ENCODE measurements at regions of chr3 and their contacts with region 1.

Region 1: GRCh38 chr3:123723522-123724168 is 138.8 kb upstream of the HACD2 start:
- DNase-seq: peak; percentile 78
- H3K4me3 ChIP-seq: no peak overlapping the region
- H3K27ac ChIP-seq: no peak overlapping the region
- H3K4me1 ChIP-seq: no peaks in the 10 kb centered on the region
- H3K27me3 ChIP-seq: peaks cover 2 to 13% of the 10 kb centered on the region in 2 experiments
- CTCF ChIP-seq: peak; percentile 84
- POLR2A ChIP-seq: no peak

Region 2: DNA sequence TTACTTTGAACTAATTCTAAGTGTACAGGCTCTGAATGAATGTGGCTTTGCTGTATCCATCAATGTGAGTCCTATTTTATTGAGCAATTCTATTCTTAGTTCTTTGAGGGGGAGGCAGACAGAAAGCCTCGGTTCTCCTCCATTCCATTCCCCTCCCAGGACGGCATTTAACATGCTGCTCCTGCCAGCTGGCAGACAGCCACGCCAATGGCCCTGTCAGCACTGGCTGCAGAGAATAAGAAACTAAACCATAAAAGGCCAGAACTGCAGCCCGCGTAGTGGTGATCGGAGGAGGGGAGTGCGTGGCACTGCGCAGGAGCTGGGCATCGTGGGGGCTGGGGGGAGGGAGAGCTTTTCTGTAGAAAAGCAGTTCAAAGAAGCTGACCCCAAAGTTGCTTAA is 62.7 kb before region 1 on chr3:
- CTCF ChIA-PET with region 1: interaction called, 154 read pairs
- POLR2A ChIA-PET with region 1: interaction called, 3 read pairs
- dilution Hi-C with region 1: no loop called
- intact Hi-C with region 1: no loop called
- DNase-seq: peak; percentile 89
- H3K4me3 ChIP-seq: no peak overlapping the region
- H3K27ac ChIP-seq: no peak overlapping the region
- H3K4me1 ChIP-seq: peaks cover 23% of the 10 kb centered on the region
- H3K27me3 ChIP-seq: no peaks in the 10 kb centered on the region
- CTCF ChIP-seq: no peak
- POLR2A ChIP-seq: no peak

Region 3: GRCh38 chr3:123700791-123701722 is 22.6 kb before region 1 on chr3:
- CTCF ChIA-PET with region 1: interaction called, 17 read pairs
- POLR2A ChIA-PET with region 1: no interaction called
- dilution Hi-C with region 1: no loop called
- intact Hi-C with region 1: loop called (anchors 1 kb)
- DNase-seq: no peak
- H3K4me3 ChIP-seq: no peak overlapping the region
- H3K27ac ChIP-seq: no peak overlapping the region
- H3K4me1 ChIP-seq: peaks cover 3% of the 10 kb centered on the region
- H3K27me3 ChIP-seq: no peaks in the 10 kb centered on the region
- CTCF ChIP-seq: no peak
- POLR2A ChIP-seq: no peak

Region 4: GRCh38 chr3:123712077-123712860 is 11.4 kb before region 1 on chr3:
- CTCF ChIA-PET with region 1: interaction called, 15 read pairs
- POLR2A ChIA-PET with region 1: no interaction called
- dilution Hi-C with region 1: no loop called
- intact Hi-C with region 1: no loop called
- DNase-seq: no peak
- H3K4me3 ChIP-seq: no peak overlapping the region
- H3K27ac ChIP-seq: no peak overlapping the region
- H3K4me1 ChIP-seq: no peaks in the 10 kb centered on the region
- H3K27me3 ChIP-seq: peaks cover 3 to 13% of the 10 kb centered on the region in 2 experiments
- CTCF ChIP-seq: no peak
- POLR2A ChIP-seq: no peak

Region 5: GRCh38 chr3:123750659-123751420 is 27.2 kb after region 1 on chr3:
- CTCF ChIA-PET with region 1: interaction called, 19 read pairs
- POLR2A ChIA-PET with region 1: no interaction called
- dilution Hi-C with region 1: no loop called
- intact Hi-C with region 1: no loop called
- DNase-seq: peak; percentile 64
- H3K4me3 ChIP-seq: no peak overlapping the region
- H3K27ac ChIP-seq: peak overlapping the region; percentile 46
- H3K4me1 ChIP-seq: peaks cover 15% of the 10 kb centered on the region
- H3K27me3 ChIP-seq: no peaks in the 10 kb centered on the region
- CTCF ChIP-seq: no peak
- POLR2A ChIP-seq: no peak

Measured in endothelial cell of umbilical vein (primary cell).